SK-N-SH (cell line): ENCODE measurements at regions of chr17 and their contacts with region 1.

Region 1: GRCh38 chr17:69539781-69540319 is 125.4 kb downstream of the MAP2K6 start:
- DNase-seq: no peak
- H3K4me3 ChIP-seq: peak overlapping the region; percentile 0 to 9; a peak in 3 of 4 replicates
- H3K27ac ChIP-seq: peak overlapping the region; percentile 18 to 86
- H3K4me1 ChIP-seq: peaks cover 0 to 7% of the 10 kb centered on the region in 2 experiments; a peak in 1 of 4 replicates
- H3K27me3 ChIP-seq: no peaks in the 10 kb centered on the region
- CTCF ChIP-seq: no peak
- EP300 ChIP-seq: peak in 1 of 2 experiments; percentile 83; a peak in 2 of 4 replicates
- RAD21 ChIP-seq: no peak

Region 2: GRCh38 chr17:69287168-69287567 is 252.7 kb before region 1 on chr17:
- CTCF ChIA-PET with region 1: no interaction called
- POLR2A ChIA-PET with region 1: no interaction called
- DNase-seq: no peak
- H3K4me3 ChIP-seq: no peak overlapping the region
- H3K27ac ChIP-seq: peak overlapping the region in 1 of 2 experiments; percentile 56; a peak in 2 of 4 replicates
- H3K4me1 ChIP-seq: peaks cover 0 to 10% of the 10 kb centered on the region in 2 experiments; a peak in 2 of 4 replicates
- H3K27me3 ChIP-seq: no peaks in the 10 kb centered on the region
- CTCF ChIP-seq: no peak
- EP300 ChIP-seq: no peak; a peak in 1 of 4 replicates
- RAD21 ChIP-seq: no peak

Region 3: DNA sequence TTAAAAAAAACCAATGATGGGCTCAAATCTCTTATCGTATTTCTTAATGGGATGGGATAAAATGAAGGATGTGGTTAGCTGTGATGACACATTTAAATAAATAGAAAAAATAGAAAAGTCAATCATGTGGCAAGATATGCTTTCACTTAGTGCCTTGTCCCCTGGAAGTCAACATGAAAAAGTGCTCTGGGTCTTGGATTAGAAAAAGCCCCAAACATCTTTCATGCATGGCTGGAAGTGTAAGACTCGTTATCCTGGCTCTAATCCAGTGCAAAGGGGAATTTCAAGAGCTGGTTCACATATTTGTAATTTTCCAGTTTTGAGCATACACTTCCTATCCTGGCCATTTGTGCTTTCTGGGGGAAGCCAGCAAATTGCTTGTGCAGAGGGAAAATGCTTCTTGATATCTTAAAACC is 35.5 kb after region 1 on chr17:
- CTCF ChIA-PET with region 1: interaction called, 10 read pairs
- POLR2A ChIA-PET with region 1: no interaction called
- DNase-seq: no peak
- H3K4me3 ChIP-seq: no peak overlapping the region
- H3K27ac ChIP-seq: peak overlapping the region; percentile 11 to 31; a peak in 3 of 4 replicates
- H3K4me1 ChIP-seq: peaks cover 3 to 23% of the 10 kb centered on the region in 2 experiments; a peak in 3 of 4 replicates
- H3K27me3 ChIP-seq: no peaks in the 10 kb centered on the region
- CTCF ChIP-seq: no peak
- EP300 ChIP-seq: peak in 1 of 2 experiments; percentile 38; a peak in 1 of 4 replicates
- RAD21 ChIP-seq: no peak

Region 4: GRCh38 chr17:69733171-69734012 is 193.5 kb after region 1 on chr17:
- CTCF ChIA-PET with region 1: no interaction called
- POLR2A ChIA-PET with region 1: no interaction called
- DNase-seq: no peak
- H3K4me3 ChIP-seq: no peak overlapping the region
- H3K27ac ChIP-seq: peak overlapping the region in 1 of 2 experiments; percentile 12; a peak in 1 of 4 replicates
- H3K4me1 ChIP-seq: peaks cover 8 to 24% of the 10 kb centered on the region in 2 experiments; a peak in 3 of 4 replicates
- H3K27me3 ChIP-seq: no peaks in the 10 kb centered on the region
- CTCF ChIP-seq: no peak
- EP300 ChIP-seq: peak in 1 of 2 experiments; percentile 29; a peak in 1 of 4 replicates
- RAD21 ChIP-seq: no peak